ENCODE measurements at regions of chr19 and their contacts with region 1.

Region 1: DNA sequence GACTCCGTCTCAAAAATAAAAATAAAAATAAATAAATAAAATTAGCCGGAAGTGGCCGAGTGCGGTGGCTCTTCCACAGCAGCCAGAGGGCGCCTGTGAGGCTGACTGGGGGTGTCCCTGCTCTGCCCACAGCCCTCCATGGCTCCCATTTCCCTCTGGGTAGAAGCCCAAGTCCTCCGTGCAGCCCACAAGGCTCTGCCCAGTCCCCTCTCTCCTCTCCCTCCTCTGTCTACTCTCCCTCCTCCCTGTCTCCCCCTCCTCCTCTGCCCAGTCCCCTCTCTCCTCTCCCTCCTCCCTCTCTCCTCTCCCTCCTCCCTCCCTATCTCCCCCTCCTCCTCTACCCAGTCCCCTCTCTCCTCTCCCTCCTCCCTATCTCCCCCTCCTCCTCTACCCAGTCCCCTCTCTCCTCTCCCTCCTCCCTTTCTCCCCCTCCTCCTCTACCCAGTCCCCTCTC is 20.4 kb downstream of the MISP start:
- DNase-seq: peak; percentile 50
- ATAC-seq: peak; percentile 45
- H3K4me3 ChIP-seq: no peak overlapping the region
- H3K4me3 Mint-ChIP-seq: no peak overlapping the region
- H3K27ac ChIP-seq: no peak overlapping the region
- H3K27ac Mint-ChIP-seq: no peak overlapping the region
- H3K4me1 ChIP-seq: peaks cover 0 to 3% of the 10 kb centered on the region in 2 donors
- H3K4me1 Mint-ChIP-seq: peaks cover 2% of the 10 kb centered on the region
- H3K27me3 ChIP-seq: peaks cover 0 to 15% (median 0%) of the 10 kb centered on the region in 4 experiments
- H3K27me3 Mint-ChIP-seq: peaks cover 10% of the 10 kb centered on the region
- CTCF ChIP-seq: peak; percentile 48

Region 2: GRCh38 chr19:741506-742131 is 29.7 kb before region 1 on chr19:
- CTCF ChIA-PET with region 1: no interaction called
- POLR2A ChIA-PET with region 1: no interaction called
- intact Hi-C with region 1: no loop called
- DNase-seq: no peak
- ATAC-seq: peak; percentile 18
- H3K4me3 ChIP-seq: no peak overlapping the region
- H3K4me3 Mint-ChIP-seq: no peak overlapping the region
- H3K27ac ChIP-seq: no peak overlapping the region
- H3K27ac Mint-ChIP-seq: no peak overlapping the region
- H3K4me1 ChIP-seq: no peaks in the 10 kb centered on the region
- H3K4me1 Mint-ChIP-seq: no peaks in the 10 kb centered on the region
- H3K27me3 ChIP-seq: no peaks in the 10 kb centered on the region
- H3K27me3 Mint-ChIP-seq: peaks cover 5% of the 10 kb centered on the region
- CTCF ChIP-seq: no peak

Region 3: GRCh38 chr19:799076-799881 is 27.9 kb after region 1 on chr19:
- CTCF ChIA-PET with region 1: no interaction called
- POLR2A ChIA-PET with region 1: no interaction called
- intact Hi-C with region 1: no loop called
- DNase-seq: peak; percentile 52
- ATAC-seq: no peak
- H3K4me3 ChIP-seq: peak overlapping the region in 4 of 5 experiments; percentile 57 to 86 (median 73)
- H3K4me3 Mint-ChIP-seq: peak overlapping the region; percentile 92
- H3K27ac ChIP-seq: peak overlapping the region in 1 of 2 donors; percentile 74
- H3K27ac Mint-ChIP-seq: peak overlapping the region; percentile 81
- H3K4me1 ChIP-seq: peaks cover 22 to 49% of the 10 kb centered on the region in 2 donors
- H3K4me1 Mint-ChIP-seq: peaks cover 44% of the 10 kb centered on the region
- H3K27me3 ChIP-seq: no peaks in the 10 kb centered on the region
- H3K27me3 Mint-ChIP-seq: no peaks in the 10 kb centered on the region
- CTCF ChIP-seq: no peak

Region 4: DNA sequence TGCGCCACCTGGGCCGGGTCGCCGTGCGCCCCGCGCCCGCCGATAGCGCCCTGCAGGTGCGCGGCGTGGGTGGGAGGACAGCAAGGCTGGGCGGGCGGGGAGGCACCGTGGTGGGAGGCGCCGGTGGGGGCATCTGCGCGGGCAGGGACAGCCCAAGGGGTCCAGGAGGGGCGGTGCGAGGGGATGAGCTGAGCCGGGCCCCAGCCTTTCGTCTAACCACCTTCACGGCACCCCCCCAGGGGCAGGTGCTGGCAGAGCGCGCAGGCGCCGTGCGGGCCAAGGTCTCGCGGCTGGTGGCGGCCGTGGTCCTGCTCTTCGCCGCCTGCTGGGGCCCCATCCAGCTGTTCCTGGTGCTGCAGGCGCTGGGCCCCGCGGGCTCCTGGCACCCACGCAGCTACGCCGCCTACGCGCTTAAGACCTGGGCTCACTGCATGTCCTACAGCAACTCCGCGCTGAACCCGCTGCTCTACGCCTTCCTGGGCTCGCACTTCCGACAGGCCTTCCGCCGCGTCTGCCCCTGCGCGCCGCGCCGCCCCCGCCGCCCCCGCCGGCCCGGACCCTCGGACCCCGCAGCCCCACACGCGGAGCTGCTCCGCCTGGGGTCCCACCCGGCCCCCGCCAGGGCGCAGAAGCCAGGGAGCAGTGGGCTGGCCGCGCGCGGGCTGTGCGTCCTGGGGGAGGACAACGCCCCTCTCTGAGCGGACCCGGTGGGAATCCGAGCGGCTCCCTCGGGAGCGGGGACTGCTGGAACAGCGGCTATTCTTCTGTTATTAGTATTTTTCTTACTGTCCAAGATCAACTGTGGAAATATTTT is 148.9 kb after region 1 on chr19:
- CTCF ChIA-PET with region 1: interaction called, 14 read pairs
- POLR2A ChIA-PET with region 1: no interaction called
- intact Hi-C with region 1: no loop called
- DNase-seq: peak; percentile 87
- ATAC-seq: peak; percentile 39
- H3K4me3 ChIP-seq: peak overlapping the region in 4 of 5 experiments; percentile 40 to 70 (median 54)
- H3K4me3 Mint-ChIP-seq: peak overlapping the region; percentile 85
- H3K27ac ChIP-seq: peak overlapping the region in 1 of 2 donors; percentile 41
- H3K27ac Mint-ChIP-seq: peak overlapping the region; percentile 38
- H3K4me1 ChIP-seq: peaks cover 49 to 60% of the 10 kb centered on the region in 2 donors
- H3K4me1 Mint-ChIP-seq: peaks cover 35% of the 10 kb centered on the region
- H3K27me3 ChIP-seq: peaks cover 0 to 32% (median 4%) of the 10 kb centered on the region in 4 experiments
- H3K27me3 Mint-ChIP-seq: no peaks in the 10 kb centered on the region
- CTCF ChIP-seq: no peak